Heart left ventricle (tissue), 16 donors: ENCODE measurements at regions of chr13 and their contacts with region 1.

Region 1: DNA sequence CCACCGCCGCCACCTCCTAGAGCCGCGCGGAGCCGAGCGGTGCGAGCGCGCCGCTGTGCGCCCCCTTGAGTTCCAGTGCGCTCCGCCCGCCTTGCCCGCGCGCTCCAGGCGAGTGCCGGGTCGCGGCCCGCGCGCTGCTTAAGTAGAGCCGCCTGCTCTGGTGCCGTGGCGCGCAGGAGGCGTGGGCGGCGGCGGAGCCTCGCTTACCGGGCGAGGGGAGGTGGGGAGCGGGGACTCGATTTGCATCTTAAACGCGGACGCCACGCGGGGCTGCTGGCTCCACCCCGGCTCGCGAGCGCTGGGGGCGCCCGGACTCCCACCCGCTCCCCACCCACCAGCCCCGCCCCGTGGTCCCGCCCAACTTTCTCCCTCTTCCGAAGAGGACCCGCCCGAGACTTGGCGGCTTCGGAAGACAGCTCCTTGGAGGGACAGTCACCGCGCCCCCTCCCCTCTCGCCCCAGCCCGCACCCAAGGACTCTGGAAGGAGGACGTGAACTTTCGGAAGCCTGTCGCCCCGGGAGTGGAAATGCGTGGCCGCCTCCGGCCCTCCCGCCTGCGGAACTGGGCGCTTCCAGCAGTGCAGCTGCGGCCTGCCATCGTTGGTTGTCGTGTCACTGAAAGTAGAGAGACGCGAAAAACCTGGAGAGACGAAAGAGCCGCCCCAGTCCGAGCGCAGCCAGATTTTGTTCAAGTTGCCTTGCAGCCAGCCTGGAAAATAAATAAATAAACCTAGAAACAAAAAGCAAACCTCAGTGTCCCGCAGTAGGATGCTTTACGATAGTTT is at the start of gene KCTD12:
- DNase-seq: peak; percentile 91 to 96 (median 93)
- ATAC-seq: peak; percentile 64 to 91 (median 86)
- H3K4me3 ChIP-seq: peak within 1 kb of the TSS; percentile 62 to 96 (median 76)
- H3K27ac ChIP-seq: peak within 1 kb of the TSS; percentile 81 to 97 (median 92)
- H3K4me1 ChIP-seq: peaks cover 0 to 33% (median 12%) of the 10 kb centered on the region in 12 donors
- H3K27me3 ChIP-seq: no peaks in the 10 kb centered on the region
- CTCF ChIP-seq: peak in 10 of 12 donors; percentile 22 to 61 (median 47)
- POLR2A ChIP-seq: peak in 1 of 2 donors; percentile 89
- total RNA-seq, gene KCTD12: 29.5 to 84.4 (median 44.1) TPM

Region 2: DNA sequence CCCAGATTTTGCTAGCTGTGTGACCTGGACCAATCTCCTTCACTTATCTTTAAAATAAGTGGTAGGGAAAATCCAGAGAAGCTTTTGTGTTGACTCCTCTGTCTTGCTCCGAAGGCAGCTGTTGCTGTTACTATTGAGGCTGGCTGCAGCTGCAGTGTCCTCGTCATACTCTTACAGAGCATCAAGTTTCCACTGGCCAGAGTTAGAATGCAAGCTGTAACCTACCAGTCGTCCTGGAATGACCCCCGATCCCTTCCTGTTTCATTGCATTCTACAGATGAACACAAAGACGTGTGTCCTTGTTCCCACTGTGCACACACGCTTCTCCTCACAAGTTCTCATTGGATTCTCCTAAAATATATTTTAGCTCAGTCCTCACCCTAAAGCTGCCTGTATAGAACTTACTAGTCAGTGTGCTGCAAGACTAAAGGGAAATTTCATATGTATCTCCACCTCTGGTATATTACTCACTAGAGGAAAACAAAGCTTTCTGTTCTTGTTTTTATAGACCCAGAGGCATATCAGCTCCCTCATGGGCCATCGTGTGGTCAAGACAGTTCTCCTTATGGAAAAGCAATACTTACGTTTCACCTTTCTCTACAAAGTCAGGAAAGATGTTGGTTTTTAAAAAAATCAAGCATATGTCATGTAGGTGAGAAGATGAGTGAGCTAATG is 660.5 kb before region 1 on chr13:
- intact Hi-C with region 1: loop called in 1 of 10 experiments (anchors 10 kb)
- DNase-seq: peak; percentile 42 to 77 (median 52)
- ATAC-seq: peak; percentile 91 to 97 (median 95)
- H3K4me3 ChIP-seq: no peak overlapping the region
- H3K27ac ChIP-seq: peak overlapping the region in 2 of 12 donors; percentile 22 to 46
- H3K4me1 ChIP-seq: peaks cover 0 to 14% (median 3%) of the 10 kb centered on the region in 12 donors
- H3K27me3 ChIP-seq: no peaks in the 10 kb centered on the region
- CTCF ChIP-seq: no peak
- POLR2A ChIP-seq: no peak

Region 3: GRCh38 chr13:76677043-76677442 is 209.4 kb before region 1 on chr13:
- intact Hi-C with region 1: loop called in 2 of 10 experiments (anchors 5 kb)
- DNase-seq: peak; percentile 60 to 74 (median 66)
- ATAC-seq: peak; percentile 71 to 96 (median 94)
- H3K4me3 ChIP-seq: no peak overlapping the region
- H3K27ac ChIP-seq: peak overlapping the region in 5 of 12 donors; percentile 8 to 41 (median 20)
- H3K4me1 ChIP-seq: peaks cover 0 to 7% (median 0%) of the 10 kb centered on the region in 12 donors
- H3K27me3 ChIP-seq: no peaks in the 10 kb centered on the region
- CTCF ChIP-seq: no peak
- POLR2A ChIP-seq: no peak

Region 4: DNA sequence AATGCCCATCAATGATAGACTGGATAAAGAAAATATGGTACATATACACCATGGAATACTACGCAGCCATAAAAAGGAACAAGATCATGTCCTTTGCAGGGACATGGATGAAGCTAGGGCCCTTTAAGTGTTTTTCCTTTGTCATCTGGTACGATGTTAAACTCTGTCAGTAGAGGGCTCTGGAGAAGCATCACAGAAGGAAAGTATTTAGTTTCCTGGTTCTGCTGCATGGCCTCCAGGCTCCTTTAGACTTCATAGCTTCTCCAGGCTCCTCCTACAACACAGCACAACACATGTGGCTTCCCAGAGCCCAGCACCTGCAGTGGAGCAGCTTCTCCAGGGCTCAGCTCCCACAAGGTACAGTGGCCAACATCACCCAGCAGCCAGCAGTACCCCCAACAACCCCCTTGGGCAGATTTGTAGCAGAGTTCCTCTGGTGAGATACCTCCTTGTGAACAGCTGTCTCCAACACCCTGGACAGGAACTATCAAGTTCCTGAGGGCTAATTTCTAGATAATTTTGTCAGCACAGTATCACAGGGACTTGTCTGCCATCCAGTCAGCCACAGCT is 63.7 kb before region 1 on chr13:
- intact Hi-C with region 1: loop called (anchors 2 to 5 kb)
- DNase-seq: no peak
- ATAC-seq: peak in 3 of 4 donors; percentile 68 to 75 (median 72)
- H3K4me3 ChIP-seq: no peak overlapping the region
- H3K27ac ChIP-seq: peak overlapping the region in 3 of 12 donors; percentile 31 to 43 (median 42)
- H3K4me1 ChIP-seq: peaks cover 0 to 30% (median 2%) of the 10 kb centered on the region in 12 donors
- H3K27me3 ChIP-seq: no peaks in the 10 kb centered on the region
- CTCF ChIP-seq: peak in 11 of 12 donors; percentile 9 to 52 (median 38)
- POLR2A ChIP-seq: no peak

Region 5: GRCh38 chr13:76991796-76992547 is 105.5 kb after region 1 on chr13 and contains the start of gene CLN5:
- intact Hi-C with region 1: loop called in 1 of 10 experiments (anchors 5 kb)
- DNase-seq: peak; percentile 93 to 97 (median 96)
- ATAC-seq: peak; percentile 97 to 99 (median 98)
- H3K4me3 ChIP-seq: peak within 1 kb of the TSS; percentile 60 to 94 (median 78)
- H3K27ac ChIP-seq: peak within 1 kb of the TSS; percentile 85 to 95 (median 90)
- H3K4me1 ChIP-seq: peaks cover 0 to 25% (median 11%) of the 10 kb centered on the region in 12 donors
- H3K27me3 ChIP-seq: no peaks in the 10 kb centered on the region
- CTCF ChIP-seq: no peak
- POLR2A ChIP-seq: peak in 1 of 2 donors; percentile 93
- total RNA-seq, gene CLN5: 12.3 to 19.1 (median 15.9) TPM